ENCODE measurements at regions of chr17 and their contacts with region 1.

Region 1: GRCh38 chr17:18033442-18034099 is 5.4 kb downstream of the ATPAF2 start:
- DNase-seq: peak; percentile 90
- H3K4me3 Mint-ChIP-seq: no peak overlapping the region
- H3K27ac Mint-ChIP-seq: no peak overlapping the region
- H3K4me1 Mint-ChIP-seq: peaks cover 34% of the 10 kb centered on the region
- H3K27me3 Mint-ChIP-seq: no peaks in the 10 kb centered on the region

Region 2: GRCh38 chr17:17694169-17695081 is 339.1 kb before region 1 on chr17:
- intact Hi-C with region 1: loop called (anchors 5 kb)
- DNase-seq: peak; percentile 93
- H3K4me3 Mint-ChIP-seq: peak overlapping the region; percentile 90
- H3K27ac Mint-ChIP-seq: peak overlapping the region; percentile 97
- H3K4me1 Mint-ChIP-seq: peaks cover 56% of the 10 kb centered on the region
- H3K27me3 Mint-ChIP-seq: no peaks in the 10 kb centered on the region

Region 3: DNA sequence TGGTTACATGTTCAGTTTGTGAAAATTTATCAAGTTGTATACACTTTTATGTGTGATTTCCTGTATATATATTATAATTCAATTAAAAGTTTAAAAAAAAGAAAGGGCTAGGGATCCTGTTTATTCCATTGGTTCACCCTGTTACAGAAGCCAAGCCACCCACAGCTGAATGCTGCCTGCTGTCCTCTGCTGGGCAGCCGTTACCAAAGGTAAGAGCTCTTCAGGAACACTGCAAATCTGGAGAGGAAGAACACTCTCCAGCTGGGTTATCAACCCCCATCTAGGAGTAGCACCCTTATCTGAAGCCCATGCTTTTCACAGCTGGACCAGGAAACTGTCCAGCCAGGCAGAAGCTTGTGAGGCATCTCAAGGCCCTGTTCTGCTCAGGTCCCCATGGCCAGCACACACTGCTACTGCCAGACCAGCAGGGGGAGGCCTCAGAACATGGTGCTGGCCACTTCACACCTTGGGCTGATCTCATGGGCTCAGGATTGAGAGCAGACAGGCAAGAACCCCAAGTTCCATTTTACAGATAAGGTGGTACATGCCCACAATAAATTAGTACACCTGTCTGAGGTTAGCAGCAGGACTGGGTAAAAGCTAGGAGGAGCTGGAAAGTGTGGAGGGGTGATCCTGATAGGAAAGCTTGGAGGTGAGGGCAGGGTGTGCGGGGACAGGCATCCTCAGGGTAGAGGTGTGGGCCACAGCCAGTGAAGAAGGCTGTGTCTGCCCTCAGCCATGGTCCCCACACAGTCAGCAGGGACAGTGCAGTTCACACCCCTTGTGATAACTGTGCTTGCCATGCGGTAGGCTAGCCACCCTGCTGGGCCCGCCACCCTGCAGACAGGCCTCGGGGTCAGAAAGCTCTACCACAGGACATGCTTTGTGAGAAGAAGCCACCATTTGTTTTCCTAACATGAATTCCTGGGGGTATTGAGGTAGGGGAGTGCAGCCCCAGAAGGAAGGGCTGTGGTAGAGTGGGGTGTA is 142.5 kb before region 1 on chr17:
- intact Hi-C with region 1: loop called (anchors 1 kb)
- DNase-seq: peak; percentile 82
- H3K4me3 Mint-ChIP-seq: no peak overlapping the region
- H3K27ac Mint-ChIP-seq: no peak overlapping the region
- H3K4me1 Mint-ChIP-seq: peaks cover 4% of the 10 kb centered on the region
- H3K27me3 Mint-ChIP-seq: no peaks in the 10 kb centered on the region

Measured in activated CD4-positive, alpha-beta T cell treated with anti-CD3 and anti-CD28 coated beads, Interleukin-2, amount 10 ng/mL, durations not matched to agents 24 days and 14 days (primary cell).